Dendritic cell treated with granulocyte-macrophage colony-stimulating factor and Interleukin-4, amounts not matched to agents 40 ng/mL and 50 ng/mL, for 4 days (primary cell): ENCODE measurements at regions of chr3 and their contacts with region 1.

Region 1: GRCh38 chr3:153246806-153247205 is 84.8 kb downstream of the RAP2B start:
- H3K4me3 Mint-ChIP-seq: no peak overlapping the region
- H3K27ac Mint-ChIP-seq: peak overlapping the region; percentile 89
- H3K4me1 Mint-ChIP-seq: peaks cover 54% of the 10 kb centered on the region
- H3K27me3 Mint-ChIP-seq: no peaks in the 10 kb centered on the region

Region 2: GRCh38 chr3:152885076-152885475 is 361.7 kb before region 1 on chr3:
- intact Hi-C with region 1: no loop called
- H3K4me3 Mint-ChIP-seq: no peak overlapping the region
- H3K27ac Mint-ChIP-seq: peak overlapping the region; percentile 55
- H3K4me1 Mint-ChIP-seq: peaks cover 15% of the 10 kb centered on the region
- H3K27me3 Mint-ChIP-seq: no peaks in the 10 kb centered on the region

Region 3: DNA sequence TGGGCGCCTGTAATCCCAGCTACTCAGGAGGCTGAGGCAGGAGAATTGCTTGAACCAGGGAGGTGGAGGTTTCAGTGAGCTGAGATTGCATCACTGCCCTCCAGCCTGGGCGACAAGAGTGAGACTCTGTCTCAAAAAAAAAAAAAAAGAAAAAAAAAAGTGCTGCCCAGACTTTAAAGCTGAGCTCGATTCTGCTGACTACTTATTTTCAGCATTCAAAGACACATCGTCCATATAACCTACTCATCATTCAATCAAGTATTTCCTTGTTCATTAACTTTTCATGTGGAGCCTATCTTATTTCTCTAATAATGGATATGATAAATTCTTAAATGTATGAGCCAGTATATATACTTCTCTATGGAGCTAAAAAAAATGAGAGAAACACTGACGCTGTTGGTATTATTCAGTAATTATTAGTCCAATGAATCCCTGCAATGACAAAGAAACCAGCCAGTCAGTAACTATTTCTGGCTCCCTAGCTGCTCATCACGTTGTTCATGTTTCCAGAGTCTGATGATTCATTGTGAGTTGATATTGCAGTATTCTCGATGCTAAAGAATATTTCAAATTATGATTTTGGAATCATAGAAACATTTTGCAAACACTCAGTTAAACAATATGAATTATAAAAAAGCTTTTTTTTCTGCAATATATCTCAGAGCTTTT is 27.1 kb after region 1 on chr3:
- intact Hi-C with region 1: no loop called
- H3K4me3 Mint-ChIP-seq: no peak overlapping the region
- H3K27ac Mint-ChIP-seq: peak overlapping the region; percentile 16
- H3K4me1 Mint-ChIP-seq: peaks cover 32% of the 10 kb centered on the region
- H3K27me3 Mint-ChIP-seq: peaks cover 2% of the 10 kb centered on the region

Region 4: DNA sequence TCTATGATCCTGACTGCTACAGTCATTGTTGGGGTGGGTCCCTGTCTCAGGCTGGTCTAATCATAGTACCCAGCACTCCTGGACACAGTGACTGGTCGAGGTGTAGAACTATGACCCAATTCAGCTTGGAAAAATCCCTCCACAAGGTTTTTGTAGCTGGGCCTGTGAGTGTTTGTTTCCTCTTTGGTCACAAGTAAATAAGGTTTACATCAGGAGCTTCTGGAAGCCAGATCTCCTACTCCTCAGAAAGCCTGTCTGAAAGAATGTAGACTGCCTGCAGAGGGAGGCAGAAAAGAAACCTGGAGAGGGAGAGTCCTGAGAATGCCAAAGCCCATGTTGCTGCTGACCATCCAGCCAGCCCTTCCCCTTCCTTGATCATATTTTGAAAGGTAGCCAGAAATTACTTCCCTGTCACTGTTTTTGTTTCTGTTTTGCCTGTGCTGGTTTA is 38.4 kb after region 1 on chr3:
- intact Hi-C with region 1: loop called (anchors 5 kb)
- H3K4me3 Mint-ChIP-seq: no peak overlapping the region
- H3K27ac Mint-ChIP-seq: peak overlapping the region; percentile 86
- H3K4me1 Mint-ChIP-seq: peaks cover 47% of the 10 kb centered on the region
- H3K27me3 Mint-ChIP-seq: no peaks in the 10 kb centered on the region

Region 5: DNA sequence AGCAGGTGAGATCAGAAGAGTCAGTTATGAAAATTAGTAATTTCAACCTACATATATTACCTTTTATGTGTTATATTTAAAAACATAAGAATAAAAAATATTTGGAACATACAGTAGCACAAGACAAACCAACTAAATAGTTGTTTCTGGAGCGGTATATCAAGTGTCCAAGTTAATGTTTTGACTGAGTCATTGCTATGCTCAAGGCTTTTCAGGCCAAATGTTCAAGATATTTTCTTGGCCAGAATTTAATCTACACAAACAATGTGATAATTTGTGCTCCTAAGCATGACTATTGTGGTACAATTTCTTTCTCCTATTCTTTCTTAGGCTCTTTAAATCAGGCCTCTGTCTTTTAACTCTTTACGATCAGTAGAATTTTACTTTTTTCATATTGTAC is 327.6 kb after region 1 on chr3:
- intact Hi-C with region 1: no loop called
- H3K4me3 Mint-ChIP-seq: no peak overlapping the region
- H3K27ac Mint-ChIP-seq: no peak overlapping the region
- H3K4me1 Mint-ChIP-seq: no peaks in the 10 kb centered on the region
- H3K27me3 Mint-ChIP-seq: peaks cover 1% of the 10 kb centered on the region